ENCODE measurements at regions of chr17 and their contacts with region 1.

Region 1: GRCh38 chr17:49556223-49556971 is 19.3 kb upstream of the NXPH3 start:
- DNase-seq: no peak
- ATAC-seq: peak; percentile 99
- H3K4me3 ChIP-seq: no peak overlapping the region
- H3K27ac ChIP-seq: no peak overlapping the region
- H3K4me1 ChIP-seq: peaks cover 4% of the 10 kb centered on the region; the same call in 1 of the 2 replicates
- H3K27me3 ChIP-seq: no peaks in the 10 kb centered on the region
- CTCF ChIP-seq: peak; percentile 95 to 97 (median 96); a peak in 5 of 6 replicates
- EP300 ChIP-seq: no peak
- POLR2A ChIP-seq: no peak
- RAD21 ChIP-seq: peak; percentile 93

Region 2: DNA sequence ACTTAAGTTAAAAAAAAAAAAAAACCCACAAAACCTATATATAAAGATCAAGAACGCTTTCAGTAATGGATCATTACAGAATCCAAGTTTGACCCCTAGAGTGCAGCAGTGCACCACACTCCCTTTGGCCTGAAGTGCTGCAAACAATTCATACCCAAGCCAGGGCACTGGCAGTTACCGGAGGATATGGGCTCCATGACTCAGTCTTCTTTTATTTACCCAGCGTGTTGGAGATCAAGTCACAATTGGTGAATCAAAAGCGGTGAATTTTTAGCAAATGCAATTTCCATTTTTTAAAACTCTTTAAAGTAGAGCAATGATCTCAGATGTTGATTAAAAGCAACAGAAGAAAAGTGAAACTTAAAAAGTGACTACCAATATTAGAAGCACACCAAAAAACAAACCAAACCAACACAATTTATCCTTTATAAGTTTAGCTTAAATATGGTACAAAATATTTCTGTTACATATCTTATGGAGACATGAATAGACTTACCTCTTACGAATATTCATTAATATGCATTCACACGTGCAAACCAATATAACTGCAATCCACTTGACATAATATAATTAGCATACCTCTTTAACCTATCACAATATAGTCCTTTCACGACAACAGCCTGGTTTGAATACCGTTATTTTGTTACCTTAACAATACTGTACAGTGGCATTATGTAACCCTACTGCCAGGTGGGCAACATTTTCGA is 240.7 kb before region 1 on chr17:
- CTCF ChIA-PET with region 1: interaction called, 26 read pairs
- POLR2A ChIA-PET with region 1: no interaction called
- RAD21 ChIA-PET with region 1: interaction called, 5 read pairs
- SMC1A ChIA-PET with region 1: no interaction called
- in situ Hi-C with region 1: loop called (anchors 5 kb)
- intact Hi-C with region 1: loop called (anchors 2 kb)
- DNase-seq: peak; percentile 66
- ATAC-seq: peak; percentile 98
- H3K4me3 ChIP-seq: peak overlapping the region; percentile 26; the same call in 1 of the 2 replicates
- H3K27ac ChIP-seq: peak overlapping the region; percentile 53
- H3K4me1 ChIP-seq: peaks cover 16% of the 10 kb centered on the region
- H3K27me3 ChIP-seq: no peaks in the 10 kb centered on the region
- CTCF ChIP-seq: peak; percentile 70 to 97 (median 81)
- EP300 ChIP-seq: no peak
- POLR2A ChIP-seq: no peak
- RAD21 ChIP-seq: peak; percentile 100

Region 3: DNA sequence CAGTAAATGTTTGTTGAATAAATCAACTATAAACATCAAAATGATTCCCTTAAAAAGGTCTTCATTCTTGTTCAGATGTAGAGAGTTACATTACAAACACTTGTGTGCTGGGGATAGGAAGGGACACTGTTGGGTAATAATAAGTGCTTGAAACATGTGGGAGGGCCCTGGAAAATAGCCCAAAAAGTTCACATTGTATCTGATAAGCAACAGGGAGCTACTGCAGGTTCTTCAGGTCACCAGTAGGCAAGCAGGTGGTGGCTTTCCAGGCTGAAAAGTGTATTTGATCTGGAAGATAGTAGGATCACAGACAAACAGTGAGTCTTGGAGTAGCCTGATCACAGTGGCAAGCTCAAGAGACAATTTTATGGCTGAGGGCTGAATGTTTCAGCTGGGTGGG is 175.3 kb before region 1 on chr17:
- CTCF ChIA-PET with region 1: no interaction called
- POLR2A ChIA-PET with region 1: no interaction called
- RAD21 ChIA-PET with region 1: no interaction called
- SMC1A ChIA-PET with region 1: no interaction called
- in situ Hi-C with region 1: no loop called
- intact Hi-C with region 1: no loop called
- DNase-seq: no peak
- ATAC-seq: no peak
- H3K4me3 ChIP-seq: no peak overlapping the region
- H3K27ac ChIP-seq: no peak overlapping the region
- H3K4me1 ChIP-seq: no peaks in the 10 kb centered on the region; the same call in 1 of the 2 replicates
- H3K27me3 ChIP-seq: no peaks in the 10 kb centered on the region; a peak in 1 of 4 replicates
- CTCF ChIP-seq: no peak
- EP300 ChIP-seq: no peak
- POLR2A ChIP-seq: no peak
- RAD21 ChIP-seq: no peak

Region 4: GRCh38 chr17:49414622-49415350 is 141.6 kb before region 1 on chr17 and contains the start of gene PHB1:
- CTCF ChIA-PET with region 1: interaction called, 119 read pairs
- POLR2A ChIA-PET with region 1: interaction called, 5 read pairs
- RAD21 ChIA-PET with region 1: interaction called, 10 read pairs
- SMC1A ChIA-PET with region 1: interaction called, 7 read pairs
- in situ Hi-C with region 1: loop called (anchors 10 kb)
- intact Hi-C with region 1: no loop called
- DNase-seq: peak; percentile 95
- ATAC-seq: peak; percentile 100
- H3K4me3 ChIP-seq: peak within 1 kb of the TSS; percentile 92
- H3K27ac ChIP-seq: peak within 1 kb of the TSS; percentile 62
- H3K4me1 ChIP-seq: no peaks in the 10 kb centered on the region
- H3K27me3 ChIP-seq: no peaks in the 10 kb centered on the region
- CTCF ChIP-seq: no peak
- EP300 ChIP-seq: no peak
- POLR2A ChIP-seq: peak; percentile 80
- RAD21 ChIP-seq: no peak
- polyA plus RNA-seq, gene PHB1: 117 to 154 TPM

Region 5: GRCh38 chr17:49496183-49496866 is 60.1 kb before region 1 on chr17:
- CTCF ChIA-PET with region 1: interaction called, 37 read pairs
- POLR2A ChIA-PET with region 1: no interaction called
- RAD21 ChIA-PET with region 1: interaction called, 6 read pairs
- SMC1A ChIA-PET with region 1: no interaction called
- in situ Hi-C with region 1: loop called (anchors 5 kb)
- intact Hi-C with region 1: loop called (anchors 2 kb)
- DNase-seq: no peak
- ATAC-seq: peak; percentile 94
- H3K4me3 ChIP-seq: peak overlapping the region; percentile 36; the same call in 1 of the 2 replicates
- H3K27ac ChIP-seq: no peak overlapping the region
- H3K4me1 ChIP-seq: peaks cover 9% of the 10 kb centered on the region; the same call in 1 of the 2 replicates
- H3K27me3 ChIP-seq: peaks cover 15 to 16% of the 10 kb centered on the region in 2 experiments
- CTCF ChIP-seq: peak; percentile 66 to 71 (median 67); a peak in 5 of 6 replicates
- EP300 ChIP-seq: no peak
- POLR2A ChIP-seq: no peak
- RAD21 ChIP-seq: peak; percentile 39

Region 6: GRCh38 chr17:49567871-49568694 is 11.7 kb after region 1 on chr17:
- CTCF ChIA-PET with region 1: interaction called, 93 read pairs
- POLR2A ChIA-PET with region 1: no interaction called
- RAD21 ChIA-PET with region 1: interaction called, 15 read pairs
- SMC1A ChIA-PET with region 1: interaction called, 10 read pairs
- in situ Hi-C with region 1: no loop called
- intact Hi-C with region 1: no loop called
- DNase-seq: no peak
- ATAC-seq: peak; percentile 80
- H3K4me3 ChIP-seq: no peak overlapping the region
- H3K27ac ChIP-seq: no peak overlapping the region
- H3K4me1 ChIP-seq: peaks cover 13% of the 10 kb centered on the region
- H3K27me3 ChIP-seq: peaks cover 0 to 2% of the 10 kb centered on the region in 2 experiments; a peak in 1 of 4 replicates
- CTCF ChIP-seq: peak; percentile 94 to 97 (median 96)
- EP300 ChIP-seq: no peak
- POLR2A ChIP-seq: no peak
- RAD21 ChIP-seq: peak; percentile 92

Region 7: DNA sequence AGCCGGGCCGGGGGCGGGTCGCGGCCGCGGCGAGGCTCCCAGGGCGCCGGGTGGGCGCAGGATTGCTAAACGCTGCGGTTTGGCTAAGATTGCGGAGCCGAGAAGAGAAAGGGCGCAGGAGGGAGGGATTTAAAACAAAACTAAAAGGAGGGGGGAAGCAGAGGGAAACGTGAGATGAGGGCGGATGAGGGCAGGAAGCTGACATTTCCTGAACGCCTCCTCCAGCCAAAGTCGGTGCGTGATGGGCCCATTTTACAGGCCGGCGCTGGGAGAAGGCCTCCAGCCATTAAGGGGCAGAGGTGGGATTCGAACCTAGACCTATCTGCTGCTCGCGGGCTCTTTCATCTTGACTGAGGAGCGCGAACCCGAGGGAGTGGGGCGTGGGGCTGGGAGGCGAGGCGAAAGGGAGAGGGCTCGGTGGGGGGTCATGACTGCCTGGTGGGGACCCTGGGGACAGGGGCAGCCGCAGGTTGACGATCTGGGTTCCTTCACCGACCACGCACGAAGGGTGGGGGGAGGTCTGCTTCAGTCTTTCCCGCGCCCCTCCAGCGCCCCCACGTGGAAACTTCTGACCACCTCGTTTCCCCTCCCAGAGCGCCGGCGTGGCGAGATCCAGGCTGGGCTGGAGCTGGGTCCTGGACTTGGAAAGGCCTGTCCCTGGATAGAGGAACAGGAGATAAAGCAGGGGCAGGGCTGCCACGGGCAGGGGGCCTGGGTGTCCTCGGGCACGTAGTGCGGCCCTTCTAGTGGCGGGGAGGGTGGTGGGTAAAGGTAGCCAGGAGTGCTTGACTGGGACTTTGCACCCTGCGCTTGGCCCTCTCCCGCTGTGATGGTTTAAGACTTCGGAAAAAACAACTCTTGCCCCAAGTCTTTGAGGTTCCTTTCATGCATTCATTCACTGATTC is 295.2 kb after region 1 on chr17:
- CTCF ChIA-PET with region 1: interaction called, 10 read pairs
- POLR2A ChIA-PET with region 1: no interaction called
- RAD21 ChIA-PET with region 1: no interaction called
- SMC1A ChIA-PET with region 1: no interaction called
- in situ Hi-C with region 1: loop called (anchors 10 kb)
- intact Hi-C with region 1: no loop called
- DNase-seq: no peak
- ATAC-seq: peak; percentile 78
- H3K4me3 ChIP-seq: peak overlapping the region; percentile 70
- H3K27ac ChIP-seq: no peak overlapping the region
- H3K4me1 ChIP-seq: no peaks in the 10 kb centered on the region
- H3K27me3 ChIP-seq: no peaks in the 10 kb centered on the region; a peak in 3 of 4 replicates
- CTCF ChIP-seq: peak; percentile 58 to 70 (median 65)
- EP300 ChIP-seq: no peak
- POLR2A ChIP-seq: no peak; the same call in 1 of the 2 replicates
- RAD21 ChIP-seq: peak; percentile 53

Region 8: DNA sequence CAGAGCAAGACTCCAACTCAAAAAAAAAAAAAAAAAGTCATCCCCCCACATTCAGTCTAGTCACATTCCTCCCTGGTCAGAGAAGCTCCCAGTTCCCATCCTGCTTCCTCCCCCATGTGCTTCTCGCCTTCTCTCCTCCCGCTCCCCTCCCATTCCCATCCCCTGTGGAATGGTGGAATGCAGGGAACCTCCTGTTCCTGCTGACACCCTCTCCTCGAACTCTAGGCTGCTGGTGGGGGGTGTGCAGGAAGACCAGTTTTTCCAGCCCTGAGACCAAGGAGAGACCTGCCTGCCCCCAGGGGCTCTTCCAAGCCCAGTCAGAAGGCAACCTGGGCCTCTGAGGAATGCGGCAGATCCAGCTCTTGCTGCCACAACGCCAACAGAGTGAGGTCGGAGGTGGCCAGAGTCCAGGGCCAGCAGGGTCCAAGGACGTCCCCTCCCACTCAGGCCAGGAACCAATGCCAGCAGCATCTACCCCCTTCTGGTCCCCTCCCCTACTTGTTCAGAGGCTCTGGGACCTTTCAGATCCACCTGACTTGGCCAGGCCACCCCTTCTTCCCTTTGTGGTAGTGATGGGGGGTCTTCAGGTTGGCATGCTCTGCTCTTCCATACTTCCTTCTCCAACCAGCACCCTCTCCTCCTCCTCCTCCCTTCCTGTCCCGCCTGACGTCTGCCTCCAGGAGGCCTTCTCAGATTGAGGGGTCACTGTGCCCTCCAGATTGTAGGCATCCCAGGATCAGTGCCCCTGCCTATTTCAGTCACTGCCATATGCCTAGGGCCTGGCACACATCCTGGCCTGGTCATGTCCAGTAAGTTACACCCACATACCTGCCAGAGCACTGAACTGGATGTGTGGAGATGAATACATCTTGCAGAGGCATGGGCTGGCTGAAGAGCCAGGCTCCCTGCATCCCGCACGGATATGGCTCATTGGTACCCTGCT is 331.0 kb after region 1 on chr17:
- CTCF ChIA-PET with region 1: no interaction called
- POLR2A ChIA-PET with region 1: no interaction called
- RAD21 ChIA-PET with region 1: no interaction called
- SMC1A ChIA-PET with region 1: no interaction called
- in situ Hi-C with region 1: no loop called
- intact Hi-C with region 1: no loop called
- DNase-seq: no peak
- ATAC-seq: no peak
- H3K4me3 ChIP-seq: no peak overlapping the region
- H3K27ac ChIP-seq: no peak overlapping the region
- H3K4me1 ChIP-seq: no peaks in the 10 kb centered on the region
- H3K27me3 ChIP-seq: peaks cover 5 to 9% of the 10 kb centered on the region in 2 experiments
- CTCF ChIP-seq: no peak
- EP300 ChIP-seq: no peak
- POLR2A ChIP-seq: no peak
- RAD21 ChIP-seq: no peak